ENCODE measurements at regions of chr3 and their contacts with region 1.

Region 1: DNA sequence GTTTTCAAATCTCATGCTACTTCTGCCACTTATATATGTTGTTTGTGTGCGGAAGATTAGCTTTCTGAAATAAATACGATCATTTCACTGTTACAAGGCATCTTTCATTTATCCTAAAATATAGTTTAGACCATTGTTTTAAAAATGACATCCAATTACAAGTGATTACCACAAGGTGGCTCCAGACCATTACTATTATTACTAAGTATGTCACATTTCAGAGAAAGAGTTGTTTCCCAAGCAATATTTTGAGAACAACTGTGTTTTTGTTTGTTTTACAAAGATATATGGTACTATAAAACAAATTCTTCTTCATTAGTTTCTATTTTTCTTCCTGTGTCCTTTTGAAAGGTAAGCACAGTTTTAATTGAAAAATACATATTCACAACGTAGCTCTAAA is 136.0 kb upstream of the RAP2B start:
- DNase-seq: peak; percentile 21 to 61

Region 2: DNA sequence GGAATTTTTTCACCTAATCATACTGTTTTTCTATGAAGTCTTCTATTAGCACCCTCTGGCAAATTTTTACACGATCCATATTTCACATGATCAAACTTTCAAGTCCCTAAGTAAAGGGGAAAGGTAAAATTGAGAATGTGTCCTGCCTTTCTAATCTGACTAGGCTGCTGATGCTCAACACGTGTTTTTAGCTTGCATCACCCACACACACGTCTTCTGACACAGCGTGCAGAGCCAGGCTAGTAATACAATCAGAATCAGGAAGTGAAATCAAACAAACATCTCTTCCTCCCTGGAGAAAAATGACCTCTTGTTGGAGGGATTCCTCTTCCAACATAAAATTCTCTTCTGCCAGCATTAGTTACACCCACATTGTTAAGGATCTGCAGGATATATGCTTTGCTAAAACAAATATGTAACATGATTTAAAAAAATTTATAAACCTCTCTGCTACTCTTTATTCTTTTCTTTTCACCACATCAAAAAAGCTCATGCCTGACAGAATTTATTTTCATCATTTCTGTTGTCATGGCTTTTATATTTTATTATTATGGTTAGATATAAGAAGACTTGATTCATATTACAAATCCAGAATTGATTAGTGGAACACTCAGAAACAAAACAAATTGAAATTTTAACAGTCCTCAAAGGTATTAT is 258.4 kb after region 1 on chr3:
- in situ Hi-C with region 1: loop called (anchors 25 kb)
- DNase-seq: peak in 1 of 2 experiments; percentile 43

Region 3: GRCh38 chr3:153313302-153313965 is 287.4 kb after region 1 on chr3:
- in situ Hi-C with region 1: no loop called
- DNase-seq: no peak

Measured in T47D (cell line).